ENCODE measurements at regions of chr4 and their contacts with region 1.

Region 1: DNA sequence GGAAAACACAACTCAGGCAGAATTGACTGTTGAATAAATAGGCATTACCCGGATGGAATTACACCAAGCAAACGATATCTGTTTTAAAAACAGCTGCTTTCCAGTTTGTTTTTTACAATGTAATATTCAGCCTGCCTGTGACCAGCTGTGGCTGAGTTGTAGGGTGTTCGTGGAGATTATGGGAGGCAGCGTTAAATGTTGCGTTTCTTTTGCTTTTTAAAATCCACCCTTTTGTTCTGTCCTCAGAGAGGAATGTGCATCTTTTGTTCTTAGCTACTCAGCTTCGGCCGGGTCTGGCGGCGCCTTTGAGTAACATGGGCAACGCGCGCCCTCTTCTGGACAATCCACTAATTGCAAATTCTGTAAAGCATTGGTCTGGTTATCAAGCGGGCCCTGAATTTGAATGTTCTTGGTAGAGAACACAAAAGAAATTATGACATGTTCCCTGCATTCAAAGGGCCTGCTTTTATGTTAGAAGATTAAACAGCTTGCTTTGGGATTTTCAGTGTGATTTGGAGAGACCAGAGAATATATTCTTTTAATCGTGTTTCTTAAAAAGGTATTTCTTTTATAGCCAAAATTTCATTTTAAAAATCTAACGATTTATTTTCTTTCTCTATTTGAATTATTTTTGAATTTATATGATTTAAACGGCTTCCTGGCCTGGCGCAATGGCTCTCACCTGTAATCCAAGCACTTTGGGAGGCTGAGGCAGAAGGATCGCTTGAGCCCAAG is 76.3 kb upstream of the TRIM2 start:
- DNase-seq: peak; percentile 95
- H3K4me3 Mint-ChIP-seq: no peak overlapping the region
- H3K27ac Mint-ChIP-seq: no peak overlapping the region
- H3K4me1 Mint-ChIP-seq: peaks cover 1% of the 10 kb centered on the region
- H3K27me3 Mint-ChIP-seq: peaks cover 24% of the 10 kb centered on the region

Region 2: DNA sequence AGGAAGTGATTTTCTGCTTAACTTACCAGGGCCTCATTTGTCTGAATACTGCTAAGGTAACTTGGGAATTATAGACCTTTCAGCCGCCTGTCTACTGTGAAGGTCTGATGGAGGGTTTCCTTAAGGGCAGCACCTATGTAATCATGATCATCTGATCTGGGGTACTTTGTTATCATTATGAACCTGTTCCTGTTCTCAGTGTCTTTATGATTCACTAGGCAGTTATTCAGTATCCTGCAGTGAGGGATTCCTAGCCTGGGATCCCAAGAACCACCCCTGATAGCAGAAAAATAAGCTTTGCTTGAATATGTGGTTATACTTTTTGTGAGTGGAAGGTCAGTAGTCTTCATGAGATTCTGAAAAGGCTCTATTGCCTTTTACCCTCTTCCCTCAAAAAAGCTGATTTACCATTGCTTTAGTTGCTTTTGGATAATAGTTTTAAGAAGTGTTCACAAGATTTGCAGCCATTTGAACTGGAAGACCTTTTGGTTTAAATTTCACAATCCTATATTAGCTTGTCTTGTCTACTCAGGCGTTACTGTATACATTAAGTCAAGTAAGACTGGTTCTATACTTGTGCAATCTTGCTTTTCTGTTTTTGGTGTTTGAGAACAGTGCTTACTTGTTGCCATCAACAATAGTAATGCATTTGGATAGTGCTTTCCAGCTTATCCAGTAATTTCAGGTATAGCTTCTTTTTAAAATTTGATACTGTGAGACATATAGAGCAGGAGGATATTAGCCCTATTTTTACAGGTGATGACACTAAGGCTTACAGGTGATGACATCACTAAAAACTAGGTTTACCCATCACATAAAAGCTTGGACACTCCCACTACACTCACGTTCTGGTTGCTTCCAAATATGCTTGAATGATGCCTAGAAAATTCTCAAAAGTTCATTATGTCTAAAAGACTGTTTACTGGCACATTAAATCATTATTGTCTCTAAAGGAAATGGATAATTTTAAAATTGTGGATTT is 1658.9 kb before region 1 on chr4:
- intact Hi-C with region 1: no loop called
- DNase-seq: no peak
- H3K4me3 Mint-ChIP-seq: no peak overlapping the region
- H3K27ac Mint-ChIP-seq: no peak overlapping the region
- H3K4me1 Mint-ChIP-seq: no peaks in the 10 kb centered on the region
- H3K27me3 Mint-ChIP-seq: peaks cover 4% of the 10 kb centered on the region

Region 3: GRCh38 chr4:151865312-151865711 is 1262.6 kb before region 1 on chr4:
- intact Hi-C with region 1: no loop called
- DNase-seq: no peak
- H3K4me3 Mint-ChIP-seq: no peak overlapping the region
- H3K27ac Mint-ChIP-seq: no peak overlapping the region
- H3K4me1 Mint-ChIP-seq: peaks cover 7% of the 10 kb centered on the region
- H3K27me3 Mint-ChIP-seq: peaks cover 12% of the 10 kb centered on the region

Region 4: GRCh38 chr4:153083447-153083947 is 44.4 kb before region 1 on chr4:
- intact Hi-C with region 1: loop called (anchors 1 kb)
- DNase-seq: peak; percentile 82
- H3K4me3 Mint-ChIP-seq: peak overlapping the region; percentile 24
- H3K27ac Mint-ChIP-seq: no peak overlapping the region
- H3K4me1 Mint-ChIP-seq: peaks cover 17% of the 10 kb centered on the region
- H3K27me3 Mint-ChIP-seq: peaks cover 25% of the 10 kb centered on the region